ENCODE measurements at regions of chr11 and their contacts with region 1.

Region 1: DNA sequence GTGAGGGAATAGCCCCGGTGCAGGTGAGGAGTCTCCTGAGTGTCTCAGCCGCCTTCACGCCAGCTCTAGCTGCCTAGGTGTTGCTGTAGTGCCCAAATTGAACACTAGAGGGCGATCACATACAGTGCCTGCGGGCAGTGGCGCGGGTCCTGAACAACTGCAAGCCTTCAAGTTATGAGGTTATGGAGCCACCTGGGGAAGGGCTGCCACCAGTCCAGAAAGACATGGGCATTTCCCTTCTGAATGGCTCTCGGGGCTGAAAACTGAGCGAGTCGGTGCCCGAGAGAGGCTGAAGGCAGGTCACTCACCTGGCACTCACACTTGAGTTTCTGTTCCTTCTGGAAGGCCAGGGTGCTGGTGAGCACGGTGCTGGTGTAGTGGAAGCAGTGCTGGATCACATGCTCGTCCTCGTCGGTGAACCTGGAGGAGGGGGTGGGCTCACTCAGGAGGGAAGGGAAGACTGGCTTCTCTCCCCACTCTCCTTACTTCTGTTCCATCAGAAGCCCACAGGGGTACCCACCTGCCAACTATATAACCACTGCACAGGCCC is 88.4 kb downstream of the PDE2A start:
- DNase-seq: peak; percentile 72
- ATAC-seq: peak; percentile 86
- H3K4me3 Mint-ChIP-seq: peak overlapping the region; percentile 62
- H3K27ac Mint-ChIP-seq: no peak overlapping the region
- H3K4me1 Mint-ChIP-seq: peaks cover 25% of the 10 kb centered on the region
- H3K27me3 Mint-ChIP-seq: peaks cover 38% of the 10 kb centered on the region
- CTCF ChIP-seq: peak; percentile 92

Region 2: DNA sequence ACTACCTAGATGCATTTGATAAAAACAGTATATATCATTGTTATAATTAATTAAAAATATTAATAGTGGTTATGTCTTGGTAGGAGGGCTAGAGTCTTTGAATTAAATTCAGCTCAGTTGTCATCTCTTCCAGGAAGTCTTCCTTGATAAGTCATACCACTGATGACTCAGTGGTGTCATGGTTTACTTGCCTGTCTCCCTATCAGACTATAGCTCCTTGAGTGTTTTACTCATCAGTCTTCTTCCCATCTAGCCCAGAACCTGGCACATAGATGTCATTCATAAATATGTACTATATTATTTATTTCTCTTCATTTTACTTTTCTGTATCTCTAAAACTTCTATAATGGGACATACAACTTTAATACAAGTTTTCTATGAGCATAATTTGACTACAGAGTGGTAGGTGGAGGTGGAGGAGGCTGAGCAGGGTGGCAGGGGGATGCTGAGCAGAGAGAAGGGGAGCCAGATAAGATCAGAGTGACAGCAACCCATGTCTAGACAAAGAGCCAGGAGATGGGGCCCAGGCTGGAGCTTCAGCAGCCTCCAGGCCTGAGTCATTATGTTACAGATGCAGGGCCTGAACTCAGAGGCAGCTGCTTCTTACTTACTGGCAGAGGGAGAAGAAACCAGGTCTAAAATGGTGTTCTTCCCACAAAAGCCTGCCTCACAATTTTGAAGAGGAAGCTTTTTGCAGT is 259.5 kb before region 1 on chr11:
- CTCF ChIA-PET with region 1: no interaction called
- POLR2A ChIA-PET with region 1: no interaction called
- intact Hi-C with region 1: no loop called
- DNase-seq: peak; percentile 48
- ATAC-seq: peak; percentile 85
- H3K4me3 Mint-ChIP-seq: no peak overlapping the region
- H3K27ac Mint-ChIP-seq: peak overlapping the region; percentile 71
- H3K4me1 Mint-ChIP-seq: peaks cover 20% of the 10 kb centered on the region
- H3K27me3 Mint-ChIP-seq: no peaks in the 10 kb centered on the region
- CTCF ChIP-seq: no peak

Region 3: GRCh38 chr11:72573072-72573854 is 12.6 kb before region 1 on chr11:
- CTCF ChIA-PET with region 1: interaction called, 11 read pairs
- POLR2A ChIA-PET with region 1: no interaction called
- intact Hi-C with region 1: no loop called
- DNase-seq: peak; percentile 50
- ATAC-seq: peak; percentile 93
- H3K4me3 Mint-ChIP-seq: no peak overlapping the region
- H3K27ac Mint-ChIP-seq: no peak overlapping the region
- H3K4me1 Mint-ChIP-seq: peaks cover 4% of the 10 kb centered on the region
- H3K27me3 Mint-ChIP-seq: peaks cover 12% of the 10 kb centered on the region
- CTCF ChIP-seq: peak; percentile 64

Region 4: GRCh38 chr11:72609045-72609444 is 23.2 kb after region 1 on chr11:
- CTCF ChIA-PET with region 1: interaction called, 138 read pairs
- POLR2A ChIA-PET with region 1: no interaction called
- intact Hi-C with region 1: no loop called
- DNase-seq: peak; percentile 28
- ATAC-seq: peak; percentile 68
- H3K4me3 Mint-ChIP-seq: no peak overlapping the region
- H3K27ac Mint-ChIP-seq: no peak overlapping the region
- H3K4me1 Mint-ChIP-seq: peaks cover 3% of the 10 kb centered on the region
- H3K27me3 Mint-ChIP-seq: peaks cover 15% of the 10 kb centered on the region
- CTCF ChIP-seq: peak; percentile 53

Region 5: DNA sequence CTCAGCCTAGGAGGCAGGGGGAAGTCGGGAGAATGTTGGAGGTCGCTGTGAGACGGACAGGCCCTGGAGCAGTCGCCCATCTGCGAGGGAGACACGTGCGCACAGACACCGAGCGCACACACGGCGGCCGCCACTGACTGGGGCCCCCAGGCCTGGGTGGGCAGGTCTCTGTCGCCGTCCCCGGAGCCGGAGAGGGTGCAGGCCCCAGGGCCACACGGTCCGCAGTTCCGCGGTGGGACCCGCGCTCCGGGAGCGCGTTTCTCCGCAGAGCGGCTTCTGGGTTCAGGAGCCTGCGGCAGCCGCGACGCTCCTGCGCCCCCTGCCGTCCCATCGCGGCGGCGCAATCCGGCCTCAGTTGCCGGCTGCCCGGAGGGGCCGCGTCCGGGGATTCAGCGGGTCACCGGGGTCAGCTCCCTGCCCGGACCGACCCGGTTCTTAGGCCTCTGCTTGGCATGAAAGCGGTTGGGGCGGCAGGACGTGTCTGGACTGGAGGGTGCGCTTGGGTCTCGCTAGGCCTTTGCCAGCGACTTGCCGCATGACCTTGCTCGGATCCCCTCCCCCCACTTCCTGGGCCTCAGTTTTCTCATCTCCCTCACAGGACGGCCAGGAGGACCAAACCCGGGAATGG is 57.2 kb after region 1 on chr11:
- CTCF ChIA-PET with region 1: interaction called, 171 read pairs
- POLR2A ChIA-PET with region 1: interaction called, 3 read pairs
- intact Hi-C with region 1: loop called (anchors 2 kb)
- DNase-seq: peak; percentile 70
- ATAC-seq: peak; percentile 90
- H3K4me3 Mint-ChIP-seq: peak overlapping the region; percentile 57
- H3K27ac Mint-ChIP-seq: no peak overlapping the region
- H3K4me1 Mint-ChIP-seq: no peaks in the 10 kb centered on the region
- H3K27me3 Mint-ChIP-seq: no peaks in the 10 kb centered on the region
- CTCF ChIP-seq: peak; percentile 100

Region 6: GRCh38 chr11:72668611-72669347 is 82.9 kb after region 1 on chr11:
- CTCF ChIA-PET with region 1: interaction called, 22 read pairs
- POLR2A ChIA-PET with region 1: no interaction called
- intact Hi-C with region 1: no loop called
- DNase-seq: peak; percentile 91
- ATAC-seq: peak; percentile 95
- H3K4me3 Mint-ChIP-seq: no peak overlapping the region
- H3K27ac Mint-ChIP-seq: no peak overlapping the region
- H3K4me1 Mint-ChIP-seq: peaks cover 14% of the 10 kb centered on the region
- H3K27me3 Mint-ChIP-seq: peaks cover 48% of the 10 kb centered on the region
- CTCF ChIP-seq: no peak

Region 7: GRCh38 chr11:72676861-72677341 is 91.1 kb after region 1 on chr11:
- CTCF ChIA-PET with region 1: interaction called, 109 read pairs
- POLR2A ChIA-PET with region 1: interaction called, 6 read pairs
- intact Hi-C with region 1: loop called (anchors 5 kb)
- DNase-seq: peak; percentile 77
- ATAC-seq: peak; percentile 82
- H3K4me3 Mint-ChIP-seq: no peak overlapping the region
- H3K27ac Mint-ChIP-seq: no peak overlapping the region
- H3K4me1 Mint-ChIP-seq: peaks cover 3% of the 10 kb centered on the region
- H3K27me3 Mint-ChIP-seq: peaks cover 50% of the 10 kb centered on the region
- CTCF ChIP-seq: no peak

Region 8: DNA sequence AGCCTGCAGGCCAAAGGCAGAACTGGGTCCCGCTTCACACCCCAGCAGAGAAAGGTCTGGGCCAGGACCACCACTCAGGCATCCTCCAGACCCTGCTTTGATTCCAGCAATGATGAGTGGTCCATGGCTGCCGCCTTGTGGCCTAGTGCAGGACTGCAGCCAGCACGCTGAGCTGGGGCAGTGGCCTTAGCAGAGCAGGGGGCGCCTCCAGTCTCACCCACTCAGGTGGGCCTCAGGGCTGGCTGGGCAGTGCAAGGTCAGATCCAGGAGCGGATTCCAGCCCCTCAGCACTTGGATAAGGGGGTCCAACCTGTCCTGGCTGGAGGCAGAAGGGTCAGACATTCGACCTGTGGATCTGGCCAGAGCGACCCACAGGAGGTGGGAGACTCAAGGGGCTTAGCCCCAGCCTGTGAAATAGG is 98.0 kb after region 1 on chr11:
- CTCF ChIA-PET with region 1: interaction called, 109 read pairs
- POLR2A ChIA-PET with region 1: interaction called, 3 read pairs
- intact Hi-C with region 1: loop called (anchors 5 kb)
- DNase-seq: peak; percentile 85
- ATAC-seq: peak; percentile 74
- H3K4me3 Mint-ChIP-seq: no peak overlapping the region
- H3K27ac Mint-ChIP-seq: no peak overlapping the region
- H3K4me1 Mint-ChIP-seq: peaks cover 23% of the 10 kb centered on the region
- H3K27me3 Mint-ChIP-seq: no peaks in the 10 kb centered on the region
- CTCF ChIP-seq: peak; percentile 90

Measured in activated CD8-positive, alpha-beta T cell treated with anti-CD3 and anti-CD28 coated beads for 36 hours (primary cell).